ENCODE measurements at regions of chr9 and their contacts with region 1.

Region 1: DNA sequence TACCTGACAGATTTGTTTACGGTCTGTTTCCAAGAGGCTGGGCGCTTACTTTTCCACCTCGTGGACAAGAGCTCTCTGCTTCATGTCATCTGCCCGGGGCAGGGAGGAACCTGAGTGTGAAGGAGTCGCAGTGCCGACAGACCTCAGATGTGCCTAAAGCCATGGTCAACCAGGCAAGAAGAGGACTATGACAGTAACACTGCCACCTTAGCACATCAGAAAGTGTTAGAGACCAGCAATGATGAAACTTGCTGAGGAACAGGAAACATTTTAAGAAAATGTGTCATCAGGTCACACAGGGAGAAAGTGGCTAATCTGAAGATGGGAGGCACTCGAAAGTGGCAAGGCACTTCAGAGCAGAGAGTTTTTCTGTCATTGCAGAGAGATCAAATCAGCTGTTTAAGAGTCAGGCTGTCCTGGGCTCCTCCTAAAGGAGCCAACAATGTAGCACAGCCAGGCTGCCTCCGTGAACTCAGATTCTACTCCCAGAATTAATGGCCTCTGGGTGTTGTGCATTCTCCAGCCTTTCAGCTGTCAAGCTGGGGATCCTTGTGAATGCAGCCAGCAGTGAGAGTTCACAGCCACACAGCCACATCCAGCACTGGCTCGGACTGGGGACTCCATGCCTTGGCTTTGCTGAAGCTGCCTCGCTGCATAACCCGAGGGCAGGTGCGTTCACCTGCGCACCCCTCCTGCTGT is 94.6 kb downstream of the RAPGEF1 start:
- DNase-seq: peak; percentile 54
- ATAC-seq: peak; percentile 65
- H3K4me3 Mint-ChIP-seq: no peak overlapping the region
- H3K27ac Mint-ChIP-seq: peak overlapping the region; percentile 89
- H3K4me1 Mint-ChIP-seq: peaks cover 63% of the 10 kb centered on the region
- H3K27me3 Mint-ChIP-seq: no peaks in the 10 kb centered on the region

Region 2: GRCh38 chr9:131590908-131591844 is 54.1 kb before region 1 on chr9:
- CTCF ChIA-PET with region 1: no interaction called
- POLR2A ChIA-PET with region 1: no interaction called
- intact Hi-C with region 1: loop called in 1 of 2 experiments (anchors 5 kb)
- DNase-seq: peak; percentile 90
- ATAC-seq: peak; percentile 94
- H3K4me3 Mint-ChIP-seq: no peak overlapping the region
- H3K27ac Mint-ChIP-seq: peak overlapping the region; percentile 85
- H3K4me1 Mint-ChIP-seq: peaks cover 28% of the 10 kb centered on the region
- H3K27me3 Mint-ChIP-seq: no peaks in the 10 kb centered on the region

Region 3: GRCh38 chr9:131656356-131657036 is 11.3 kb after region 1 on chr9:
- CTCF ChIA-PET with region 1: interaction called, 8 read pairs
- POLR2A ChIA-PET with region 1: interaction called, 8 read pairs
- intact Hi-C with region 1: loop called (anchors 1 kb)
- DNase-seq: peak; percentile 81
- ATAC-seq: peak; percentile 68
- H3K4me3 Mint-ChIP-seq: peak overlapping the region; percentile 39
- H3K27ac Mint-ChIP-seq: peak overlapping the region; percentile 87
- H3K4me1 Mint-ChIP-seq: peaks cover 83% of the 10 kb centered on the region
- H3K27me3 Mint-ChIP-seq: no peaks in the 10 kb centered on the region

Region 4: GRCh38 chr9:131661568-131662288 is 16.5 kb after region 1 on chr9:
- CTCF ChIA-PET with region 1: interaction called, 9 read pairs
- POLR2A ChIA-PET with region 1: interaction called, 8 read pairs
- intact Hi-C with region 1: loop called in 1 of 2 experiments (anchors 1 kb)
- DNase-seq: peak; percentile 90
- ATAC-seq: peak; percentile 91
- H3K4me3 Mint-ChIP-seq: peak overlapping the region; percentile 45
- H3K27ac Mint-ChIP-seq: peak overlapping the region; percentile 88
- H3K4me1 Mint-ChIP-seq: peaks cover 86% of the 10 kb centered on the region
- H3K27me3 Mint-ChIP-seq: no peaks in the 10 kb centered on the region

Measured in activated CD4-positive, alpha-beta T cell treated with anti-CD3 and anti-CD28 coated beads for 36 hours (primary cell).